Activated B cell treated with CpG ODN at 0.5 μM for 24 hours (primary cell): ENCODE measurements at regions of chr5 and their contacts with region 1.

Region 1: GRCh38 chr5:78467752-78468357 is 107.4 kb downstream of the SCAMP1 start:
- DNase-seq: no peak
- ATAC-seq: peak; percentile 49
- H3K4me3 Mint-ChIP-seq: no peak overlapping the region
- H3K27ac Mint-ChIP-seq: no peak overlapping the region
- H3K4me1 Mint-ChIP-seq: peaks cover 3% of the 10 kb centered on the region
- H3K27me3 Mint-ChIP-seq: no peaks in the 10 kb centered on the region
- CTCF ChIP-seq: peak; percentile 32

Region 2: DNA sequence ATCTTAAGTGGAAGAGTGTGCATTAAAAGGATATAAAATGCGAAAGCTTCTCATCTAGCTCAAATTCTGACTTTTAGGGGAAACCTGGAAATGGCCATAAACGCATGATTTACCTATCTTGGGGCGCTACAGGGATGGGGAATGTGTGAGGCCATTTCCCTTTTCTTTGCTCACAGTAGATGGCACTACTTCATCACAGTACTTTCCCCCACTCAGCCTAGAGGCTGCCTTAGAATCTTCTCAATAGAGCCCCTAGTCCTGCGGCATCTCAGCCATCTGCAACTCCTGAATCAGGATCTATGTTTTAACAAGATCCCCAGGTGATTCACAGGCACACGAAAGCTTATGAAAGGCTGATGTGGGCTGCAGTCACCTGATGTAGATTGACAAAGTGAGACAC is 70.0 kb after region 1 on chr5:
- CTCF ChIA-PET with region 1: interaction called, 17 read pairs
- POLR2A ChIA-PET with region 1: no interaction called
- intact Hi-C with region 1: loop called (anchors 2 kb)
- DNase-seq: no peak
- ATAC-seq: peak; percentile 80
- H3K4me3 Mint-ChIP-seq: no peak overlapping the region
- H3K27ac Mint-ChIP-seq: no peak overlapping the region
- H3K4me1 Mint-ChIP-seq: peaks cover 10% of the 10 kb centered on the region
- H3K27me3 Mint-ChIP-seq: no peaks in the 10 kb centered on the region
- CTCF ChIP-seq: no peak

Region 3: GRCh38 chr5:78677777-78678668 is 210.2 kb after region 1 on chr5:
- CTCF ChIA-PET with region 1: no interaction called
- POLR2A ChIA-PET with region 1: no interaction called
- intact Hi-C with region 1: no loop called
- DNase-seq: no peak
- ATAC-seq: no peak
- H3K4me3 Mint-ChIP-seq: no peak overlapping the region
- H3K27ac Mint-ChIP-seq: no peak overlapping the region
- H3K4me1 Mint-ChIP-seq: no peaks in the 10 kb centered on the region
- H3K27me3 Mint-ChIP-seq: no peaks in the 10 kb centered on the region
- CTCF ChIP-seq: no peak

Region 4: DNA sequence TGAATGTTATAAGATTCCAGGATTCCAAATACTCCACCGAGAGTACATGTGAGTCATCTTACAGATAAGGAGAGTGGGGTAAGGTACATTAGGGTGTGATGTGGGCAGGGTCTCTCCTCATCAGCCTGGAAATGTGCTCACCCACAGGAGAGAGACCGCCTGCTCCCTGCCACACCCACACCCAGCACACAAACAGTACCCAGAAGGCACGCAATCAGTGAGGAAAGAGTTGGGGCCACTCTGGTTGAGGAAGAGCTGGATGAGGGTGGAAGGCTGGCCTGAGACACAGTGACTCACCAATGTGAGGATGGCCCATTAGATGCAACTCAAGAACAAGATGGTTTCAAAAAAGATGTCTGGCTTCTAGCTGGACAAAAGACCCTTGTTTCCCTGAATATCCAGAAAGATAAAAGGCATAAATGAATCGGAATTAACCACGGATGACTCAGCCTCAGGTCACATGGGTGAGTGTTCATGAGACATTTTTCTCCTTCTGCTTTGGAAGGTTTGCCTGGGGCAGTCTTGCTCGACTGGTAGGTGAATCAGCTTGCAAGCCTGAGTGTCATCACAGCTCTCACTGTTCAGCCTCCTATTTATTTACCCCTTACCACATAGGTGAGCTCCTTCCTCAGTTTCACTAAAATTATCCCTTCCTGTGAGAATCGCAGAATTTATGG is 231.8 kb after region 1 on chr5:
- CTCF ChIA-PET with region 1: no interaction called
- POLR2A ChIA-PET with region 1: no interaction called
- intact Hi-C with region 1: no loop called
- DNase-seq: no peak
- ATAC-seq: no peak
- H3K4me3 Mint-ChIP-seq: no peak overlapping the region
- H3K27ac Mint-ChIP-seq: no peak overlapping the region
- H3K4me1 Mint-ChIP-seq: no peaks in the 10 kb centered on the region
- H3K27me3 Mint-ChIP-seq: no peaks in the 10 kb centered on the region
- CTCF ChIP-seq: no peak

Region 5: DNA sequence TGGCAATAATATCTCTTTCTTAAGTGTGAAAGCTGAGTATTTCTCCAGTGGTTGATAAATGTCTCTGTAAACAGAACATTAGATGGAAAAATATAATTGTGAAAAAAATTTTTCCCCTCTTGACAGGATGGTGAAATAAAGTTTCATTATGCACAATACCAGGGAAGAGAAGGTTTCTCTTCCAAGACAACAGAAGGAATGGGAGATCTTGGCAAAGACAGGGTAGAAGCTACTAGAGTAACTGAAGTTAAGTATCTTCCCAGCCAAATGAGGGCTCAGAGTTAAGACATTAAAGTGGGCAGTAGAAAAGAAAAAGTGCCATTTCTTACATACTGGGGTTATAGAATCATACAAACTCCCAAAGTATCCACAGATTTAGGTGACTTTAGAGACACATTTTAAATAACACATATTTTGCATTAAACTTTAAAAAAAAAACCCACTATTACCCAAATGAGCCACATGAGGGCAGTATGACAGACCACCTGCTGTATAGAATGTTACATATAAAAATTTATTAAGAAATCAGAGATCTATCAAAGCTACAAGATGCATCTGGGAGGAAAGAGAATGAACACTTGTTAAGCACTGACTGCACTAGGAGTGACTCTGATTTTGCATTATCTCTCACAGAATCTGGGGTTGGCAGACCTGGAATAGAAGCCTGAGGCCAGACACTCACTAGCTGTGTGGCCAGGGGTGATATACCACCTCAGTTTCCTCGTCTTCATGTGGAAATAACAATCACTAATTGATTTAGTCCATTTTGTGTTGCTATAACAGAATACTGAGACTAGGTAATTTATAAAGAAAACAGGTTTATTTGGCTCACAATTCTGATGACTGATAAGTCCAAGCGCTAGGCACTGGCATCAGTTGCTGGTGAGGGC is 418.7 kb after region 1 on chr5:
- CTCF ChIA-PET with region 1: no interaction called
- POLR2A ChIA-PET with region 1: no interaction called
- intact Hi-C with region 1: loop called (anchors 2 kb)
- DNase-seq: no peak
- ATAC-seq: no peak
- H3K4me3 Mint-ChIP-seq: no peak overlapping the region
- H3K27ac Mint-ChIP-seq: peak overlapping the region; percentile 2
- H3K4me1 Mint-ChIP-seq: peaks cover 39% of the 10 kb centered on the region
- H3K27me3 Mint-ChIP-seq: no peaks in the 10 kb centered on the region
- CTCF ChIP-seq: peak; percentile 73

Region 6: DNA sequence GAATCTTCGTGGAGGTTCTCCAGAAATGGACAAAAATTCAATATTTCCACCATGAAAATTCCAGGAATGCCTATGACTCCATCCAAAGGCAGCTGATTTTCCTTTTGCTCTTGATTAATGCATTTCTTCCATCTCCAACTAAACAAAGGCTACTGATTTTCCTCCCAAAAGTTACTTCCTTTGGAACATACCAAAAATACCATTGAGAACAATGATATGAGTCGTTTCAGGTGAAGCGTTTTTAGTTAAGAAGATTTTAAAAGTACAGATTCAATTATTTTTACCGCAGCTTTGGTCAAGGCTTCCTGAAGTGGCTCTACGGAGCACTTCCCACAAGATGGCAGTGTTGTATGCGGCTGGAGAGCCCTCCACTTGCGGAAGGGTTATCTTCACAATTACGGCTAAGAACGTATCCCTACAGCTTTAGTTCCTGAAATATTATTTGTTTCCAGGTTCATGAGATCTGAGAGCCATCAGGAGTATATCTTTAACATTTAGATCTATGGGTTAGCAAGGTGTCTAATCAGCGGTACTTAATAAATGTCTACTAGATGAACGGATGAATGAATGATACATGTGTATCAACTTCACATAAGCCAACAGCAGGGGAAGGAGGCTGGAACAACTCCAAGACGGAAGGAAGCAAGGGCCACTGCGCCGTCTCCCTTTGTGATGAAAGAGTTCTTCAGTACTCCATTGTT is 553.2 kb after region 1 on chr5:
- CTCF ChIA-PET with region 1: interaction called, 4 read pairs
- POLR2A ChIA-PET with region 1: no interaction called
- intact Hi-C with region 1: loop called (anchors 2 kb)
- DNase-seq: no peak
- ATAC-seq: peak; percentile 66
- H3K4me3 Mint-ChIP-seq: no peak overlapping the region
- H3K27ac Mint-ChIP-seq: no peak overlapping the region
- H3K4me1 Mint-ChIP-seq: peaks cover 17% of the 10 kb centered on the region
- H3K27me3 Mint-ChIP-seq: peaks cover 50% of the 10 kb centered on the region
- CTCF ChIP-seq: no peak

Region 7: DNA sequence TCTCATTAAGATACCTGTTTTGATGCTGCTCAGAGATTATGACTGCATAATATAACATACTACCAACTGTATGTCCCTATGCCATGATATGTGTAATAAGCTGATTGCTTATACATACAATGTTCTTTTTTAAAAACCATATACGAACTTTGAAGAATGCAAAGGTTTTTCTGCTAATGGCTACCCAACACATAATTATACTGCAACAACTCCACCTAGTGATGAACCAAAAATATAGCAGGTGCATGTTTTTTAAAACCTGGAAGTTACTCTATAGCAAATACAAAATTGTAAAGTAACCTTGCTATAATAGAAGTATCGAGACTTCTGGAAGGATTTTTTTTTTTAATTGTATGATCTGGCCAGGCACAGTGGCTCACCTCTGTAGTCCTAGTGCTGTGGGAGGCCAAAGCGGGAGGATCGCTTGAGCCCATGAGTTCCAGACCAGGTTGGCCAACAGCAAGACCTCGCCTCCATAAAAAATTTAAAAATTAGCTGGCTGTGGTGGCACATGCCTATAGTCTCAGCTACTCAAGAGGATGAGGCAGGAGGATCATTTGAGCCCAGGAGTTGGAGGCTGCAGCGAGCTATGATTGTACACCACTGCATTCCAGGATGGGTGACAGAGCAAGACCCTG is 997.0 kb after region 1 on chr5:
- CTCF ChIA-PET with region 1: no interaction called
- POLR2A ChIA-PET with region 1: no interaction called
- intact Hi-C with region 1: loop called (anchors 10 kb)
- DNase-seq: no peak
- ATAC-seq: no peak
- H3K4me3 Mint-ChIP-seq: no peak overlapping the region
- H3K27ac Mint-ChIP-seq: no peak overlapping the region
- H3K4me1 Mint-ChIP-seq: no peaks in the 10 kb centered on the region
- H3K27me3 Mint-ChIP-seq: peaks cover 1% of the 10 kb centered on the region
- CTCF ChIP-seq: no peak